ENCODE measurements at regions of chrX and their contacts with region 1.

Region 1: GRCh38 chrX:110036162-110037033 is 33.5 kb downstream of the TMEM164 start:
- DNase-seq: no peak
- ATAC-seq: no peak
- H3K4me3 ChIP-seq: no peak overlapping the region
- H3K27ac ChIP-seq: no peak overlapping the region
- H3K4me1 ChIP-seq: no peaks in the 10 kb centered on the region
- H3K27me3 ChIP-seq: no peaks in the 10 kb centered on the region
- CTCF ChIP-seq: no peak

Region 2: DNA sequence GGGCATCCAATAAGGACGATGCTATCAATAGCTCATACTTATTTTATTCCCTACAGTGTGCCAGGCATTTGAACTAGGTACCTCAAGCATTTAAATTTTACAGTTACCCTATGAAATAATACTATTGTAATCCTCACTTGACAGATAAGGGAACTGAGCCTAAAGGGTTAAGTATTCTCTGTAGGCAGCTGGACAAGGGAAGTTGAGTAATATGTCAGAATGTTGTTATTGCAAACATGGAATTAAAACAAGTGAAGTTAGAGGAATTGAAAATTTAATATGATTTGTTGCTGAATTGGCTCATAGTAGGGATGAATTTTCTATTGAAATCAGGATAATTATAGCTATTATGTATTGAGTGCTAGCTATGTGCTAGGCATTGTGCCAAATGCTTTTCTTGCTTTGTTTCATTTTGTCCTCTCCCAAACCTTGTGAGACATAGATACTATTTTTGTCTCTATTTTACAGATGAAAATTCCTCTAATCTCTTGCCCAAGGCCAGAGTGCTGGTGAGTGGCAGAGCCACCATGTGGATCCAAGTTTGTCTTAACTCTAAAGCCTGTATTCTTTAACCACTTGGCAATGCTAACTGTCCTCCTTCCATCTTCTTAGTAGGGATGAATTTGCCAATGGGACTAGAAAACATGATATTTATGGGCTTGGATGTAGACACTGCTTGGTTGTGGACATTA is 24.6 kb after region 1 on chrX:
- CTCF ChIA-PET with region 1: no interaction called
- POLR2A ChIA-PET with region 1: interaction called, 19 read pairs
- in situ Hi-C with region 1: no loop called
- intact Hi-C with region 1: no loop called
- DNase-seq: no peak
- ATAC-seq: no peak
- H3K4me3 ChIP-seq: no peak overlapping the region
- H3K27ac ChIP-seq: no peak overlapping the region
- H3K4me1 ChIP-seq: no peaks in the 10 kb centered on the region
- H3K27me3 ChIP-seq: no peaks in the 10 kb centered on the region
- CTCF ChIP-seq: no peak